Head of caudate nucleus (tissue), 42 donors: ENCODE measurements at regions of chr2 and their contacts with region 1.

Region 1: GRCh38 chr2:127408004-127408806 is 10.0 kb upstream of the PROC start:
- DNase-seq: peak; percentile 65 to 96 (median 92)

Region 2: DNA sequence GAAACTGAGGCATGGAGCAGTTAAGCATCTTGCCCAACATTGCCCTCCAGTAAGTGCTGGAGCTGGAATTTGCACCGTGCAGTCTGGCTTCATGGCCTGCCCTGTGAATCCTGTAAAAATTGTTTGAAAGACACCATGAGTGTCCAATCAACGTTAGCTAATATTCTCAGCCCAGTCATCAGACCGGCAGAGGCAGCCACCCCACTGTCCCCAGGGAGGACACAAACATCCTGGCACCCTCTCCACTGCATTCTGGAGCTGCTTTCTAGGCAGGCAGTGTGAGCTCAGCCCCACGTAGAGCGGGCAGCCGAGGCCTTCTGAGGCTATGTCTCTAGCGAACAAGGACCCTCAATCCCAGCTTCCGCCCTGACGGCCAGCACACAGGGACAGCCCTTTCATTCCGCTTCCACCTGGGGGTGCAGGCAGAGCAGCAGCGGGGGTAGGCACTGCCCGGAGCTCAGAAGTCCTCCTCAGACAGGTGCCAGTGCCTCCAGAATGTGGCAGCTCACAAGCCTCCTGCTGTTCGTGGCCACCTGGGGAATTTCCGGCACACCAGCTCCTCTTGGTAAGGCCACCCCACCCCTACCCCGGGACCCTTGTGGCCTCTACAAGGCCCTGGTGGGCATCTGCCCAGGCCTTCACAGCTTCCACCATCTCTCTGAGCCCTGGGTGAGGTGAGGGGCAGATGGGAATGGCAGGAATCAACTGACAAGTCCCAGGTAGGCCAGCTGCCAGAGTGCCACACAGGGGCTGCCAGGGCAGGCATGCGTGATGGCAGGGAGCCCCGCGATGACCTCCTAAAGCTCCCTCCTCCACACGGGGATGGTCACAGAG is 11.5 kb after region 1 on chr2:
- intact Hi-C with region 1: loop called (anchors 2 kb)
- DNase-seq: peak in 3 of 42 donors; percentile 8 to 38 (median 9)